ENCODE measurements at regions of chr3 and their contacts with region 1.

Region 1: GRCh38 chr3:102394517-102394916 is 40.3 kb upstream of the ZPLD1 start:
- DNase-seq: no peak
- ATAC-seq: no peak

Region 2: GRCh38 chr3:100754563-100755334 is 1639.8 kb before region 1 on chr3:
- intact Hi-C with region 1: loop called (anchors 5 kb)
- DNase-seq: no peak
- ATAC-seq: no peak

Region 3: DNA sequence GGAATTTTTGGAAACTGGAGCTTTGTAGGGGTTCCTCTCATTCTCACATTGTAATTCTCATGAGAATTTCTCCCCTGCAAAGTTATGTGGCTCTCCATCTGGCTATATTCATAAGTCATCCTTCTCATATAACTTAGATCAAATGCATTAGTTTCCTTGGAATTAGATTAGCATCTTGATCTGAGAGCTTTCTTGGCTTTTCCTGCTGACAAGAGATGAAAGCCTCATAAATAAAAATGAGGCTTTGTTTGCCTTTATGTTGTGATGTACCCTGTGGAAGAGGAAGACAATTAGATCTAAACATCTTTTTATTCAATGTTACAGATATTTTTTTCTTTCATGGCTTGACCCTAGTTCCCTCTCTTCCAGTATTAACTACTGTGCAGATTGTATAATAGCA is 125.1 kb before region 1 on chr3:
- intact Hi-C with region 1: no loop called
- DNase-seq: no peak
- ATAC-seq: no peak

Region 4: GRCh38 chr3:102471001-102471400 is 76.5 kb after region 1 on chr3:
- intact Hi-C with region 1: no loop called
- DNase-seq: no peak
- ATAC-seq: no peak

Measured in sciatic nerve (tissue), 2 donors.